ENCODE measurements at regions of chr14 and their contacts with region 1.

Region 1: GRCh38 chr14:32576088-32576795 is 247.1 kb downstream of the AKAP6 start:
- DNase-seq: no peak
- H3K4me3 ChIP-seq: no peak overlapping the region
- H3K27ac ChIP-seq: no peak overlapping the region
- H3K4me1 ChIP-seq: no peaks in the 10 kb centered on the region
- H3K27me3 ChIP-seq: peaks cover 5% of the 10 kb centered on the region
- CTCF ChIP-seq: peak; percentile 84 to 87 (median 85)

Region 2: GRCh38 chr14:32865886-32866285 is 289.6 kb after region 1 on chr14:
- dilution Hi-C with region 1: no loop called
- DNase-seq: no peak
- H3K4me3 ChIP-seq: no peak overlapping the region
- H3K27ac ChIP-seq: no peak overlapping the region
- H3K4me1 ChIP-seq: no peaks in the 10 kb centered on the region
- H3K27me3 ChIP-seq: no peaks in the 10 kb centered on the region
- CTCF ChIP-seq: no peak

Region 3: DNA sequence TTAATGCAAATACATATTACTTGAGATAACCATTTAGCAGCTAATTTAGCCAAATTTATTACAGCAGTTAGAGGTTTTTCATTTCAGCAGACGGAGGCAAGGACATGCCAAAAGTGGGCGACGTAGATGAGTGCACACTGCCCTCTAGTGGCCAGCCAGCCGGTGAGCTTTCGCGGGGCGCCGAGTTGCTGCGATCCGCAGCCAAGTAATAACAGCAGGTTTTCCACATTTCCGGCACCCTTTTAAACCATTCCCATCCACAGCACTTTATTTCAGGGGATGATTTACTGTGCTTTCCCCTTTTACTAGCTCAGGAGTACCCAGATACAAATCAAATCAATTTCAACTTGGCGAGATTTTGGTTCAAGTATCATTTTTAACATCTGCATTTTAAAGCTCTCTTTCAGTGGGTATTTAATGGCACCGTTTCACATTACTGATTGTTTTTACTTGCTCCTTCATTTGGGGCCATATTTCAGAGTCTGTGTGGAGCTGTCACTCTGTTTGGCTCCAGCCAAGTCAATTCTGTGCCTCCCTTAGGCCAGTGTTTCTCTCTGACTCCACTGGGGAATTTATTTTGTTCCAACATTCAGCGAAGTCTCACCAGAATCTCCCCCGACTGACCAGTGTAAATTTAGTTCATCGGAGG is 1216.6 kb after region 1 on chr14:
- dilution Hi-C with region 1: loop called (anchors 25 kb)
- DNase-seq: no peak
- H3K4me3 ChIP-seq: peak overlapping the region in 2 of 3 experiments; percentile 14 to 16
- H3K27ac ChIP-seq: no peak overlapping the region
- H3K4me1 ChIP-seq: peaks cover 15% of the 10 kb centered on the region
- H3K27me3 ChIP-seq: no peaks in the 10 kb centered on the region
- CTCF ChIP-seq: peak; percentile 84 to 97 (median 92)

Region 4: DNA sequence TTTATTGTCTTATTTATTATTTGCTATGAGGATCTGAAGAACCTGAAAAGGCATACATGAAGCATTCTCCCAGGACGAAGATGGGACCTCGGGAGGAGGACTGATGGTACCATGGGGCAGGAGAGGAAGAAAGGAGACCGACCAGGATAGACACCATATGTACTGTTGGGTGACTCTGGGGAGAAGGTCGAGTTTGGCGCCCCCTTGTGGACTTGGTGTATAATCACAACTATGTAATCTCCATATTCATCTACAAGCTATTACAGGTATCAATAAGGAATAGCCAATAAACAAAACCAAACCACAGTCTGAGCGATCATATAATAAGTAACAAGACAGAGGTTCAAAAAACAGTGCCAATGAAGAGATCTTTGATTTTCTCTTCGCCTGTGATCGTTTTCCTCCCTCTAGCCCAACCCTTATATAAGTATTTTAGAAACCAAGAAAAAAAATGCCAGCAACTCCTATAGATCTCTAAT is 1746.7 kb after region 1 on chr14:
- dilution Hi-C with region 1: loop called (anchors 25 kb)
- DNase-seq: no peak
- H3K4me3 ChIP-seq: no peak overlapping the region
- H3K27ac ChIP-seq: no peak overlapping the region
- H3K4me1 ChIP-seq: no peaks in the 10 kb centered on the region
- H3K27me3 ChIP-seq: peaks cover 3% of the 10 kb centered on the region
- CTCF ChIP-seq: peak; percentile 65 to 82 (median 71)

Measured in keratinocyte (primary cell).